ENCODE measurements at regions of chr1 and their contacts with region 1.

Region 1: DNA sequence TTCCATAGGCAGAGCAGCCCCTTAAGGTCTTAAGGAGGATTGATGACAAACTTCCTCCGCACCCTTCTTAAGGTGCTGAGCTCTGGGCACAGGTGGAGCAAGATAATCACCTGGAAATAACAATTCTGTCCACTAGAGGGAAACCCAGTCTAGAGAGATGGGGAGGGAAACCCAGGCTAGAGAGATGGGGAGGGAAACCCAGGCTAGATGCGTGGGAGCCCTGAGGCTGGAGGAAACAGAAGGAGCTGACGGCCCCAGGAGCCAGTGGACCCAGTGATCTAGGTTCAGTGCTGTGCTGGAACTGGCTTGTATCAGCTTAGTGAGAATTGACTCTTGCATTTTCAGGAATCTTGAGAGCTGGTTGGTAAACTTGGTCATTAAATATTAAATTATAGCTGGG is 17.8 kb upstream of the MYCL start:
- DNase-seq: peak; percentile 87
- CTCF ChIP-seq: peak; percentile 58

Region 2: DNA sequence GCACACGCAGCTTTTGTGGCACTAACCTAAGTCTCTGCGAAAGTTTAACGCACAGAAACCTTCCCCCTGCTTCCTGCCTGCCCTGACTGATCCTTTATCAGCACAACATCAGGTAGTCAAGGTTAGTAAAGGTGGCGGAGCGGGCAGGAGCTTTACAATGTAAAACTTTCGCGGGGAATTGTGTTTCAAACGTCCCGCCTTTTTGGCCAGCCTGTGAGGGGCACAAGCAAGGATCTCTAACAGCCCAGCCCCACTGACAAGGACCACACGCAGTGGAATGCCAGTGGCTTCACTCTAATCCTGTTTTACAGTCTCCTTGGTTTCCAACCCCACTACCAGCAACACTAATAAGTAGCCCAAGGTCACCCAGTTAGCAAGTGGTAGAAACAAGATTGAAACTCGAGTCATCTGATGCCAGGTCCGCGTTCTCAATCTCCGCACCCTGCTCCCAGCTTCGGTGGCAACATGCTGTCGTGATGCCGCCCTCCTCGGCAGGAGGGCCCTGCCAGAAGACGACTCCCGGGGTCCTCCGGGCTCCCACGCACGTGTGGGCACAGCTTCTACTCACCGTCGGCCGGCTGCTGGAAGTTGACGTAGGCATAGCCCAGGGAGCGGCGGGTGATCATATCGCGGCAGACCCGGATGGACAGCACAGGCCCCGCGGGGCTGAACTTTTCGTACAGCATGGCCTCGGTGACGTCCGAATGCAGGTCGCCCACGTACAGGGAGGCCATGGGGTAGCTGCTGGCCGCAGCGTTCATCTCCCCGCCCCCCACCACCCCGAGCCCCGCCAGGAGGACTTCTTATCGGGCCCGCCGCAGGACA is 344.1 kb before region 1 on chr1:
- CTCF ChIA-PET with region 1: no interaction called
- POLR2A ChIA-PET with region 1: no interaction called
- DNase-seq: peak; percentile 67
- CTCF ChIP-seq: no peak

Region 3: GRCh38 chr1:39892601-39893595 is 26.6 kb before region 1 on chr1:
- CTCF ChIA-PET with region 1: interaction called, 11 read pairs
- POLR2A ChIA-PET with region 1: no interaction called
- DNase-seq: no peak
- CTCF ChIP-seq: no peak

Region 4: GRCh38 chr1:39933956-39934941 is 14.7 kb after region 1 on chr1:
- CTCF ChIA-PET with region 1: interaction called, 39 read pairs
- POLR2A ChIA-PET with region 1: no interaction called
- DNase-seq: no peak
- CTCF ChIP-seq: no peak

Region 5: GRCh38 chr1:39973503-39974135 is 54.1 kb after region 1 on chr1:
- CTCF ChIA-PET with region 1: interaction called, 159 read pairs
- POLR2A ChIA-PET with region 1: no interaction called
- DNase-seq: peak; percentile 83
- CTCF ChIP-seq: peak; percentile 92

Region 6: DNA sequence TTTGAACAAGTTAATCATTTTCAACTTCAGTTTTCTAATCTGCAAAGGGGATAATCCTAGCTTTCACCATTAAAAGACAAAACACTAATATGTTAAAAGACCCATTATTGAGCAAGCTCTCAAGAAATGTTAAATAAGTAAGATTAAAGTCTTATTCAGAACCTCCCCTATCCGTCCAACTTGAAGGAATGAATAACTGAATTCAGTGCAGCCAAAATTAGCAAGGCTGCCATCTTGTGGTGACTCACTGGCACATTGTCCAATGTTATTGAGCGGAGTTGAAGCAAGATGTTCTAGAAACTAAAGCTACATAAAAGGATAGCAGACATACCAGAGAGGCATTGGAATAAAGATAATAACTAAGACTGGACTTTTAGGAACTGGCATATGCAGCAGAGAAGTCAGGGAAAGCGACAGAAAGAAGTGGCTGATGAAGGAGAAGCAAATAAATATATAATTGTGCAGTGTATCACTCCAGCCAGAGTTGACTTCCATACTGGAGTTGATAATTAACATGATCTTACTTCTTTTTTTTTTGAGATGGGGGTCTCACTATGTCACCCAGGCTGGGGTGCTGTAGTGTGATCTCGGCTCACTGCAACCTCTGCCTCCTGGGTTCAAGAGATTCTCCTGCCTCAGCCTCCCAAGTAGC is 112.8 kb after region 1 on chr1:
- CTCF ChIA-PET with region 1: interaction called, 171 read pairs
- POLR2A ChIA-PET with region 1: interaction called, 4 read pairs
- DNase-seq: peak; percentile 57
- CTCF ChIP-seq: peak; percentile 81